ENCODE measurements at regions of chr9 and their contacts with region 1.

Region 1: GRCh38 chr9:133335878-133336811 is at the start of gene SURF6:
- DNase-seq: peak; percentile 85 to 93
- H3K4me3 ChIP-seq: peak within 1 kb of the TSS; percentile 87 to 95
- H3K27ac ChIP-seq: peak within 1 kb of the TSS; percentile 71 to 73
- H3K4me1 ChIP-seq: peaks cover 0 to 32% (median 24%) of the 10 kb centered on the region in 4 donors
- H3K27me3 ChIP-seq: no peaks in the 10 kb centered on the region
- CTCF ChIP-seq: no peak

Region 2: GRCh38 chr9:133023117-133023890 is 312.8 kb before region 1 on chr9:
- intact Hi-C with region 1: loop called (anchors 10 kb)
- DNase-seq: peak in 1 of 2 donors; percentile 28
- H3K4me3 ChIP-seq: no peak overlapping the region
- H3K27ac ChIP-seq: no peak overlapping the region
- H3K4me1 ChIP-seq: peaks cover 0 to 6% (median 0%) of the 10 kb centered on the region in 4 donors
- H3K27me3 ChIP-seq: peaks cover 0 to 3% of the 10 kb centered on the region in 2 donors
- CTCF ChIP-seq: no peak

Region 3: DNA sequence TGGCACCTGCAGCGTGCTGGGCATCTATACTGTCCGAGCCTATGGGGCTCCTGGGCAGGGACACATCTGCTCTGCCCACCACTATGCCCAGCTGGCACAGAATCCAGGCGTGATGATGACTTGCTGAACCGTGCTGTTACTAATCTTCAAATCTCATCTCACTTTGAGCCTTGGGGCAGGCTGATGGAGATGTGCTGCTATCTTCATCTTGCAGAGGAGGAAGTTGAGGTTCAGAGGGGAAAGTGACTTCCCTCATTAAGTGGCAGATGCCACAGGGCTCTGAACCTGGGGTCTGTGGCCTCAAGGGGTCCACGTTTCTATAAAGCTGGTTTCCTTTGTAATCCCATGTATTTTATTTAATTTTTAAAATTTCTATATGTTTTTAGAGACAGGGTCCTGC is 138.1 kb after region 1 on chr9:
- intact Hi-C with region 1: no loop called
- DNase-seq: no peak
- H3K4me3 ChIP-seq: no peak overlapping the region
- H3K27ac ChIP-seq: no peak overlapping the region
- H3K4me1 ChIP-seq: peaks cover 0 to 15% (median 9%) of the 10 kb centered on the region in 4 donors
- H3K27me3 ChIP-seq: no peaks in the 10 kb centered on the region
- CTCF ChIP-seq: no peak